ENCODE measurements at regions of chr10 and their contacts with region 1.

Region 1: GRCh38 chr10:103618575-103619423 is 125.3 kb downstream of the NEURL1 start:
- DNase-seq: no peak
- H3K4me3 ChIP-seq: no peak overlapping the region
- H3K27ac ChIP-seq: no peak overlapping the region
- H3K4me1 ChIP-seq: no peaks in the 10 kb centered on the region; a peak in 1 of 7 replicates
- H3K27me3 ChIP-seq: no peaks in the 10 kb centered on the region
- CTCF ChIP-seq: no peak
- EP300 ChIP-seq: no peak
- POLR2A ChIP-seq: no peak
- RAD21 ChIP-seq: no peak

Region 2: GRCh38 chr10:103481974-103482531 is 136.7 kb before region 1 on chr10:
- CTCF ChIA-PET with region 1: no interaction called
- POLR2A ChIA-PET with region 1: no interaction called
- DNase-seq: no peak
- H3K4me3 ChIP-seq: no peak overlapping the region
- H3K27ac ChIP-seq: no peak overlapping the region
- H3K4me1 ChIP-seq: peaks cover 0 to 2% (median under 1%) of the 10 kb centered on the region in 4 experiments; a peak in 2 of 7 replicates
- H3K27me3 ChIP-seq: no peaks in the 10 kb centered on the region
- CTCF ChIP-seq: peak; percentile 26 to 63 (median 46); a peak in 3 of 4 replicates
- EP300 ChIP-seq: no peak
- POLR2A ChIP-seq: no peak
- RAD21 ChIP-seq: peak in 1 of 2 experiments; percentile 45; a peak in 2 of 4 replicates

Region 3: DNA sequence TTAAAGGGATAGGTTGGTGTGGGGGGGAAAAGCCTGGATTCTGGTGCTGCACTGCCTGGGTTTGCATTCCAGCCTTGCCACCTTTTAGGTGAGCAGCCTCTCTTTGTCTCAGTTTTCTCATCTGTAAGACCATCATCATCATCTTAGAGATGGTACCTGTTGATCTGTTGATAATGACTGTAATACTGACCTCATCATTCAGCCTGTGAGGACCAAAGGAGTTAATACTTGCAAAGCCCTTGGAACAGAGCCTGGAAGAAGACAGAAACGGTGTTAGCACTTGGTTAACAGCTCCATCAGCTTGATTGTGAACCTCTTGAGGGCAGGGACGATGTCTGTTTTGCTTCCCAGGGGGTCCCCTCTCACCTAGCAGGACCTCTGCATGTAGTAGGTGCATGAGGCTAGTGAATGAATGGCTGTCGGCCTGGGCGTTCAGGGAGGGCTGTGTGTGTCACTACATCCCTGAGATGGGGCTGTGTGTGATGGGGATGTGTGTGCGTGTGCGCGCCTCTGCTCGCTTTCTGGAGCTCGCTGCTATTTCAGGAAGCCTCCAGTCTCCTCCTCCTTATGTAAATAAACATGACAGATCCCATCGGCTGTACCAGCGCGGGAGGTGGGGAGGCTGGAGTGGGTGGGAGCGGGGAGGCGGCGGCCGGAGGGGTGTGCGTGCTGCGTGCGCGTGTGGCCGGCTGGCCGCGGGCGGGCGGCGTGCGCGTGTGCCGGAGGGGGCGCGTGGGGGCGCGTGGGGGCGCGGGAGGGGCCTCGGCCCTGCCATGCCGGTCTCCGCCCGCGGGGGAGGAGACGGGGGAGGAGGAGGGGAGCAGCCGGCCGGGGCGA is 64.1 kb before region 1 on chr10:
- CTCF ChIA-PET with region 1: no interaction called
- POLR2A ChIA-PET with region 1: no interaction called
- DNase-seq: peak in 1 of 2 experiments; percentile 64
- H3K4me3 ChIP-seq: peak overlapping the region; percentile 35 to 63 (median 39)
- H3K27ac ChIP-seq: no peak overlapping the region
- H3K4me1 ChIP-seq: peaks cover 0 to 6% (median 0%) of the 10 kb centered on the region in 4 experiments; a peak in 3 of 7 replicates
- H3K27me3 ChIP-seq: peaks cover 0 to 13% (median 10%) of the 10 kb centered on the region in 4 experiments; a peak in 5 of 7 replicates
- CTCF ChIP-seq: no peak
- EP300 ChIP-seq: no peak
- POLR2A ChIP-seq: no peak
- RAD21 ChIP-seq: no peak

Region 4: GRCh38 chr10:103637927-103638557 is 19.2 kb after region 1 on chr10:
- CTCF ChIA-PET with region 1: interaction called, 16 read pairs
- POLR2A ChIA-PET with region 1: interaction called, 3 read pairs
- DNase-seq: no peak
- H3K4me3 ChIP-seq: no peak overlapping the region
- H3K27ac ChIP-seq: no peak overlapping the region
- H3K4me1 ChIP-seq: peaks cover 8 to 35% (median 27%) of the 10 kb centered on the region in 4 experiments
- H3K27me3 ChIP-seq: no peaks in the 10 kb centered on the region
- CTCF ChIP-seq: no peak
- EP300 ChIP-seq: no peak
- POLR2A ChIP-seq: no peak
- RAD21 ChIP-seq: no peak

Region 5: DNA sequence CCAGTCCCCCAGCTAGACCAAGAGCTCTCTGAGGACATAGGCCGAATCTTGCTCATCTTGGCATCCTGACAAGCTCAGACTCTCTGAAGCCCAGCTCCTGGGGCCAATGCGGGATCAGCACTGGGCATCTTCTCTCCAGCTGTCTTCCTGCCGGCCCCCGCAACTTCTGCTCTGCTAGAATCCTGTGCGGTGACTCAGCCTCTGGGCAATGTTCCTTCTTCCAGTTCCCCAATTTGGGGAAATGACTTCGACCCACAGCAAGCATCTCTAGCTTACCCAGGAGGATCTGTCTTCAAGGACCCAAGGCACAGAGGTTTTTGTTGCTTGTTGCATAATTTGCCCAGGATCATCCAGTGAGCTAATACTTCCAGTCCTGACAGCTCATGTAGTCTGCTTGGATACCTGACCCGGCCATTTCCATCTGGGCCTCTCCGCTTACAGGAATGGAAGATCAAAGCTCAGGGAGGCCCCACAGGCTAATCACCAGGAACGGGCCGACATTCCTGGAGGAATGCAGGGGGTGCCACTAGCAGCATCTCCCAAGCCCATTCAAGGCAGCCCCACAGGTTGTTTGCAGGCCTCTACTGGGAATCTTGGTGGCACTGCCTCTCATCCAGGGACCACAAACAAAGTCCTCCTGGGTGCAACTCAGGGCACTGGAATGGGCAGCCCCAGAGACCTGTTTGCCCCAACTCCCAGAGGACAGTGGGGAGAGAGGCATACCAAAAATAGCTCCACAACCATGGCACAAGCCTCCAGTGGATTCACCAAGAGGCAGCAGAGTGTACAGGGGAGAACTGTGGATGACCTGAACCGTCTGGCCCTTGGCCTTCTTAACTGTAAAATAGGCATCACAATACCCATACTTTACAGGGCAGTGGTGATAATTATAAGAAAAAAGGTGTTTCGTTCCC is 26.6 kb after region 1 on chr10:
- CTCF ChIA-PET with region 1: interaction called, 10 read pairs
- POLR2A ChIA-PET with region 1: interaction called, 3 read pairs
- DNase-seq: no peak
- H3K4me3 ChIP-seq: no peak overlapping the region
- H3K27ac ChIP-seq: no peak overlapping the region
- H3K4me1 ChIP-seq: peaks cover 0 to 24% (median 12%) of the 10 kb centered on the region in 4 experiments; a peak in 6 of 7 replicates
- H3K27me3 ChIP-seq: no peaks in the 10 kb centered on the region
- CTCF ChIP-seq: no peak
- EP300 ChIP-seq: no peak
- POLR2A ChIP-seq: no peak
- RAD21 ChIP-seq: no peak

Region 6: GRCh38 chr10:103666087-103666761 is 47.4 kb after region 1 on chr10:
- CTCF ChIA-PET with region 1: interaction called, 31 read pairs
- POLR2A ChIA-PET with region 1: no interaction called
- DNase-seq: peak in 1 of 2 experiments; percentile 76
- H3K4me3 ChIP-seq: no peak overlapping the region
- H3K27ac ChIP-seq: no peak overlapping the region
- H3K4me1 ChIP-seq: peaks cover 10 to 27% (median 17%) of the 10 kb centered on the region in 4 experiments
- H3K27me3 ChIP-seq: no peaks in the 10 kb centered on the region; a peak in 1 of 7 replicates
- CTCF ChIP-seq: peak; percentile 43 to 71 (median 64)
- EP300 ChIP-seq: no peak
- POLR2A ChIP-seq: no peak
- RAD21 ChIP-seq: peak; percentile 26 to 58; a peak in 3 of 4 replicates